B cell (primary cell): ENCODE measurements at regions of chr19 and their contacts with region 1.

Region 1: GRCh38 chr19:48720613-48721296 is 1.2 kb upstream of the MAMSTR start:
- DNase-seq: peak; percentile 93
- ATAC-seq: peak; percentile 86
- H3K4me3 ChIP-seq: peak overlapping the region; percentile 47 to 91 (median 75)
- H3K4me3 Mint-ChIP-seq: peak overlapping the region; percentile 98
- H3K27ac ChIP-seq: peak overlapping the region; percentile 92 to 93
- H3K27ac Mint-ChIP-seq: peak overlapping the region; percentile 98
- H3K4me1 ChIP-seq: peaks cover 10 to 25% of the 10 kb centered on the region in 2 donors
- H3K4me1 Mint-ChIP-seq: peaks cover 21% of the 10 kb centered on the region
- H3K27me3 ChIP-seq: no peaks in the 10 kb centered on the region
- H3K27me3 Mint-ChIP-seq: no peaks in the 10 kb centered on the region
- CTCF ChIP-seq: no peak

Region 2: DNA sequence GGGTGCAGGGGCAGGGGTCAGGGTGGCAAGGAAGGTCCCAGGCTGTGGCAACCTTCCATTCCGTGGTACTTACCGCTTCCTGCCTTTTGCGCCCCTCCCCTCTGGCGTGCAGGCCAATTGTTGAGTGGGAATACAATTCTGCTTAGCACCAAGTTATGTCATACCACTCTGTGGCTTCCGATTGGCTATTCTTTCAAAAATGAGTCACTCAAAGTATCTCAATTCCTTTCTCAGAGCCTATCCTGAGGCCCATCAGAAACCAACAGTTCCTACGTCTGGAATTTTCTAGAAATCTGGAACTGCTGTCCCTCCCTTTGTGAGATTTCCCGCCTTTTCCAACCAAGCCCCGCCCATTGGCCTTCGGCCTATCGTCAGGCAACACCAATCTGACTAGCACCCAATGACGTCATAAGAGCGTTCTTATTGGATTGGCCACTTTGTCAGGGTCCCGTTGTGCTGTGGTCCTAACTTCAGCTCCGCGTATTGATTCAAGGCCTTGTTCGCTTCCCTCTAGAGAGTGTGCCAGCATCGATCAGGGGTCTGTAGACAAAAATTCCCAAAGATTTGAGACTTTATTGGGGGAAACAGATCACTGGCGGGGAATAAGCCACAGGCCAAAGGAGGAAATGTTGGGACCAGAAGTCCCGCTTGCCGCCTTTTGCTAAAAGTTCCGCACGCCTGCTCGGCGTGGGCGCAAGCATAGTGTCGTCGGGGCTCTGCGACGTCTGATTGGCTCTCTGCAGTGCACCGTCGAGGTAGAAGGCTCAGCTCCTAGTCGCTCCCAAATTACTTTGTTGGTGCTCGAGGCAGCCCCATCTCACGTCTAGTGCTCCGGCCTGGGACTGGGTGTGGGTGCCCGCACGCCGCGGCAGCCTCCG is 59.7 kb before region 1 on chr19:
- CTCF ChIA-PET with region 1: no interaction called
- POLR2A ChIA-PET with region 1: no interaction called
- intact Hi-C with region 1: no loop called
- DNase-seq: peak; percentile 94
- ATAC-seq: peak; percentile 93
- H3K4me3 ChIP-seq: peak overlapping the region in 4 of 5 experiments; percentile 30 to 56 (median 52)
- H3K4me3 Mint-ChIP-seq: peak overlapping the region; percentile 88
- H3K27ac ChIP-seq: peak overlapping the region; percentile 96 to 97
- H3K27ac Mint-ChIP-seq: peak overlapping the region; percentile 97
- H3K4me1 ChIP-seq: peaks cover 8 to 19% of the 10 kb centered on the region in 2 donors
- H3K4me1 Mint-ChIP-seq: peaks cover 16% of the 10 kb centered on the region
- H3K27me3 ChIP-seq: no peaks in the 10 kb centered on the region
- H3K27me3 Mint-ChIP-seq: no peaks in the 10 kb centered on the region
- CTCF ChIP-seq: no peak

Region 3: DNA sequence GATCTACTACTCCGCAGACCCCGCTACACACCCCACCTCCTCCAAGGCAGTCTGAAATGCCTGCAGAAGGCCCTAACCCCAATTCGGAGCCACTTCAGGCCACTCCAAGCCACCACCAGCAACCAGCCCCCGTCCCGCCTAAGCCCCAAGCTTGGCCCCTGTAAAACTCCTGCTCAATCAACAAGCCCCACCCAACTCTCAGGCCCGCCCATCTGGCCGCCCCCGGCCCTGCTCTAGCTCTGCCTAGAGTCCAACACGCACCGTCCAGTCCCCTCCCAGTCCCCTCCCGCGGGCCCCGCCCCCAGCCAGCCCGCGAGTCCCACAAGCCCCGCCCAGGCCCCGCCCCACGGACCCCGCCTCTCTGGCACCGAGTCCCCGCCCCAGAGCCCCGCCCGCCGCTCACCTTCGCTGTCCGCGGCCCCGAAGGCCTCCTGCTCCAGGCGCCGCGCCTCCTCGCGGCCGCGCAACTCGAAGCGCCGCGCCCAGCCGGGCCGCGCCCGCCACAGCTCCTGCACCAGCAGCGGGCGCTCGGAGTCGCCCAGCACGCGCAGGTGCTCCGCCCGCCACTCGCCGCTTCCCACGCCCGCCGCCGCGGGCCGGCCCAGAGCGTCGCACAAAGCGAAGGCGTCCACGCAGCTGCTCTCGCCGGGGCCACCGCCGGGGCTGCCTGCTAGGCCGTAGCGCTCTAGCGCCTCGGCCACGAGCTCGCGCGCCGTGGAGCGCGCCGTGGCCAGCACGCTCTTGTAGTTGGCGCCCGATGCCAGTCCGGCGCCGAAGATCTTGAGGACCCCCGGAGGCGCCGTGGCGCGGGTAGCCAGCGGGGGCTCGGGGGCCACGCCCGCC is 18.0 kb after region 1 on chr19:
- CTCF ChIA-PET with region 1: interaction called, 12 read pairs
- POLR2A ChIA-PET with region 1: interaction called, 11 read pairs
- intact Hi-C with region 1: no loop called
- DNase-seq: peak; percentile 91
- ATAC-seq: peak; percentile 93
- H3K4me3 ChIP-seq: peak overlapping the region in 3 of 5 experiments; percentile 48 to 65 (median 54)
- H3K4me3 Mint-ChIP-seq: peak overlapping the region; percentile 63
- H3K27ac ChIP-seq: no peak overlapping the region
- H3K27ac Mint-ChIP-seq: peak overlapping the region; percentile 67
- H3K4me1 ChIP-seq: peaks cover 22 to 25% of the 10 kb centered on the region in 2 donors
- H3K4me1 Mint-ChIP-seq: peaks cover 15% of the 10 kb centered on the region
- H3K27me3 ChIP-seq: peaks cover 0 to 26% (median 10%) of the 10 kb centered on the region in 4 experiments
- H3K27me3 Mint-ChIP-seq: peaks cover 15% of the 10 kb centered on the region
- CTCF ChIP-seq: peak; percentile 54

Region 4: DNA sequence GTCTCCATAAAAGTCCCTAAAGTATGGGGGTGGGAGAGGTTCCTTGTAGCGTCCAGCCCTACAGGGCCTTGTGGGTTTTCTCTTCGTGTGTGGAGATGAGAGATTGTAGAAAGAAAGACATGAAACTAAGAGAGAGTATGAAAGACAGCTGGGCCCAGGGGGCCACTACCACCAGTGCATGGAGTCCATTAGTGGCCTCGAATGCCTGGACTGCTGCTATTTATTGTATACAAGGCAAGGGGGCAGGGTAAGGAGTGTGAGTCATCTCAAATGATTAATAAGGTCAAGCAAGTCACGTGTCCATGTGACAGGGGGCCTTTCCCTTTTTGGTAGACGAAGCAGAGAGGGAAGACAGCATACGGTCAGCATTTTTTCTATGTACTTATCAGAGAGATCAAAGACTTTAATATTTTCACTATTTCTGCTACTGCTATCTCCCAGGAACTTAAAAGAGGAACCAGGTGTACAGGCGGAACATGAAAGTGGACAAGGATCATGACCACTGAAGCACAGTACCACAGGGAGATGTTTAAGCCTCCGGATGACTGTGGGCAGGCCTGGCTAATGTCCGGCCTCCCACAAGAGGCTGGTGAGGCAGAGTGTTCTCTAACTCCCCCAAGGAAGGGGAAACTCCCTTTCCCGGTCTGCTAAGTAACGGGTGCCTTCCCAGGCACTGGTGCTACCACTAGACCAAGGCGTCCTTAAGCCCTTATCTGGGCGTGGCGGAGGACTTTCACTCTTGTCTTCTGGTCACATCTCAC is 60.1 kb after region 1 on chr19:
- CTCF ChIA-PET with region 1: no interaction called
- POLR2A ChIA-PET with region 1: no interaction called
- intact Hi-C with region 1: no loop called
- DNase-seq: no peak
- ATAC-seq: no peak
- H3K4me3 ChIP-seq: no peak overlapping the region
- H3K4me3 Mint-ChIP-seq: no peak overlapping the region
- H3K27ac ChIP-seq: no peak overlapping the region
- H3K27ac Mint-ChIP-seq: peak overlapping the region; percentile 5
- H3K4me1 ChIP-seq: peaks cover 3 to 15% of the 10 kb centered on the region in 2 donors
- H3K4me1 Mint-ChIP-seq: peaks cover 19% of the 10 kb centered on the region
- H3K27me3 ChIP-seq: no peaks in the 10 kb centered on the region
- H3K27me3 Mint-ChIP-seq: no peaks in the 10 kb centered on the region
- CTCF ChIP-seq: no peak